ENCODE measurements at regions of chr14 and their contacts with region 1.

Region 1: GRCh38 chr14:75011356-75011994 is 8.8 kb downstream of the EIF2B2 start:
- DNase-seq: no peak
- ATAC-seq: peak; percentile 70
- H3K4me3 ChIP-seq: no peak overlapping the region
- H3K27ac ChIP-seq: peak overlapping the region; percentile 69 to 87
- H3K4me1 ChIP-seq: peaks cover 0 to 10% of the 10 kb centered on the region in 2 donors
- H3K27me3 ChIP-seq: no peaks in the 10 kb centered on the region

Region 2: DNA sequence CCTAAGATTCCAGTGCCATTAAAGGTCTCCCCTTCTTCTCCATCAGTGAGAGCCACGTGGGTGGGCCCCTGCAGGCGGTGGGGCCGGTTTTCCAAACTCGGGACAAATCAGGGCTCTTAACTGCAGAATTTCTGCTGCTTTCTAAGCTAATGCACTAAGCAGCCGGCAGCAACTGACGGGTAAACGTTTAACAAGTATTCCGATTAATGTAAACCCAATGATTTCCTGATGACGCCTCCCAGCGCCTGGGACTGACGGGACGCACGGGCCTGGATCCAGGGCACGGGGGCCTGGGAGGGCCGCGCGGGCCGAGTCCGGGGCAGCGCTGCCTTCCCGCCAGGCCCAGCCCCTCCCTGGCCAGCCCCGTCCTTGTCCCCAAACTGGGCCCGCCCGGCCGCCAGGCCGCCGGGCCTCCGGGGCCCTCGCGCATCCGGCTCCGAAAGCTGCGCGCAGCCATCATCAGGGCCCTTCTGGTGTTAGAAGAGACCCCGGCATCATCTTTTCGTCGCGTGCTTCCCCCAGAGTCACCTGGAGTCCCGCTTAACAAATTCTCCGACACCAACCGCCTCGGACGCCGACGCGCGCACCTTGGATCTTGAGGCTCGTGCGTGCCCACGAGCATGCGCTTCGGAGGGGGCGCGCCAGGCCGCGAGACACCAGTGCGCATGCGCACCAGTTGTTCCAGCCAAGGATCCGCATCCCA is 39.5 kb after region 1 on chr14 and contains the start of gene MLH3:
- intact Hi-C with region 1: loop called in 1 of 2 experiments (anchors 5 kb)
- DNase-seq: peak; percentile 89 to 96
- ATAC-seq: peak; percentile 91
- H3K4me3 ChIP-seq: peak within 1 kb of the TSS; percentile 21 to 23
- H3K27ac ChIP-seq: peak within 1 kb of the TSS in 1 of 2 donors; percentile 22
- H3K4me1 ChIP-seq: peaks cover 2 to 4% of the 10 kb centered on the region in 2 donors
- H3K27me3 ChIP-seq: no peaks in the 10 kb centered on the region
- total RNA-seq, gene MLH3: 26.7 to 43.6 TPM

Region 3: GRCh38 chr14:75069045-75069810 is 57.8 kb after region 1 on chr14 and contains the start of gene ZC2HC1C:
- intact Hi-C with region 1: loop called in 1 of 2 experiments (anchors 5 kb)
- DNase-seq: peak; percentile 97 to 98
- ATAC-seq: peak; percentile 97
- H3K4me3 ChIP-seq: peak within 1 kb of the TSS; percentile 55 to 58
- H3K27ac ChIP-seq: peak within 1 kb of the TSS; percentile 15 to 62
- H3K4me1 ChIP-seq: no peaks in the 10 kb centered on the region
- H3K27me3 ChIP-seq: no peaks in the 10 kb centered on the region
- total RNA-seq, gene ZC2HC1C: 1.8 to 2.0 TPM